ENCODE measurements at regions of chr19 and their contacts with region 1.

Region 1: DNA sequence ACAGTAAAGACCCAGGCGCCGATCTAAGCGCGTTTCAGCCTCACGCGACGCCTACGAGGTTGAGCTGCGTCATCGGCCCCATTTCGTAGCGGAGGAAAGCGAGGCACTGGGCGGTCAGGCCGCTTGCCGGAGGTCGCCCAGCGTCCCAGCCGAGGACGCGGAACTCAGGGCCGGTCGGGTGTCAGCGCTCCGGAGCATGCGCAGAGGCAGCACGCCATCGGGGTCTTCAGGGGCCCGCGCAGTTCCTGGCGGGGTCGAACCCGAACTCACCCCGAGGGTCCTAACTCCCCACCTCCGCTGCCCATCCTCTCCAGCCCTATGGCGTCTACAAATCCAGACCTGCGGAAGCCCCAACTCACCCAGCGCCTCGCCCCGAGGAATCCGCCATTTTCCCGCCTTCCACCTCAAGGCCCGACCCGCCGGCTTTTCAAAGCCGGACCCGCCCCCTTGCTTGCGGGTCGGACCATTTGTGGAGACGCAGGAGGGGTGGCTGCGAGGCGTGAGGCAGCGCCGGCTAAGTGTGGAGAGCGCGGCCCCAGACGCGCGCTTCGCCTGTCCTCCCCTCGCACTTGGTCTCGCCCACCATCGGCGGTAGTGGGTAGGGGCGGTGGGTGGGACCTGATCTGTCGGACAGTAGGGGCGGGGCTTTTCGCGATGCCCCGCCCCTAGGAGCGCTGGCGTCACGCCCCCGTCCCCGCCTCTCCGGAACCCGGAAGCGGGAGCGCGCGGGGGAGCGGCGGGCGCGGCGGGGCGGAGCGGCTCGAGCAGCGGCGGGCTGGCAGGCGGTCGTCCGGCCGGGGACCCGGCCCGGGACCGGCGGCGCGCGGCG is at the starts of genes HAUS8 and MYO9B:
- DNase-seq: peak; percentile 100
- H3K4me3 ChIP-seq: peak within 1 kb of the TSS; percentile 84 to 94 (median 93)
- H3K27ac ChIP-seq: peak within 1 kb of the TSS; percentile 71 to 81
- H3K4me1 ChIP-seq: peaks cover 0 to 14% (median 8%) of the 10 kb centered on the region in 3 donors
- H3K27me3 ChIP-seq: no peaks in the 10 kb centered on the region
- CTCF ChIP-seq: no peak
- total RNA-seq, gene HAUS8: 6.9 TPM
- total RNA-seq, gene MYO9B: 68.1 TPM

Region 2: GRCh38 chr19:17149393-17150135 is 74.3 kb after region 1 on chr19:
- intact Hi-C with region 1: loop called (anchors 10 kb)
- DNase-seq: peak in 2 of 5 donors; percentile 37 to 55
- H3K4me3 ChIP-seq: no peak overlapping the region
- H3K27ac ChIP-seq: no peak overlapping the region
- H3K4me1 ChIP-seq: no peaks in the 10 kb centered on the region
- H3K27me3 ChIP-seq: no peaks in the 10 kb centered on the region
- CTCF ChIP-seq: no peak

Measured in kidney (tissue), 22 donors.